Activated T-helper 2 cell treated with anti-CD3 and anti-CD28 coated beads, Interferon-gamma antibody, Interleukin-2, Interleukin-4, amounts not matched to agents 10 μg/mL and 5 μg/mL and 100 μg/mL, durations not matched to agents 14 hours and 24 hours and 36 hours (primary cell): ENCODE measurements at regions of chr7 and their contacts with region 1.

Region 1: DNA sequence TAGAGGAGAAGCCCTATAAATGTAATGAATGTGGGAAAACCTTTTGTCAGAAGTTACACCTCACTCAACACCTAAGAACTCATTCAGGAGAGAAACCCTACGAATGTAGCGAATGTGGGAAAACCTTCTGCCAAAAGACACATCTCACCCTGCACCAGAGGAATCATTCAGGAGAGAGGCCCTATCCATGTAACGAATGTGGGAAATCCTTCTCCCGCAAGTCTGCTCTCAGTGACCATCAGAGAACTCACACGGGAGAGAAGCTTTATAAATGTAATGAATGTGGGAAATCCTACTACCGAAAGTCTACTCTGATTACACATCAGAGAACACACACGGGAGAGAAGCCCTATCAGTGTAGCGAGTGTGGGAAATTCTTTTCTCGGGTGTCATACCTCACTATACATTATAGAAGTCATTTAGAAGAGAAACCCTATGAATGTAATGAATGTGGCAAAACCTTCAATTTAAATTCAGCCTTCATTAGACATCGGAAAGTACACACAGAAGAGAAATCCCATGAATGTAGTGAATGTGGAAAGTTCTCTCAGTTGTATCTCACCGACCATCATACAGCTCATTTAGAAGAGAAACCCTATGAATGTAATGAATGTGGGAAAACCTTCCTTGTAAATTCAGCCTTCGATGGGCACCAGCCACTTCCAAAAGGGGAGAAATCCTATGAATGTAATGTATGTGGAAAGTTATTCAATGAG is 18.9 kb downstream of the RBAK start:
- DNase-seq: no peak
- H3K4me3 Mint-ChIP-seq: no peak overlapping the region
- H3K27ac Mint-ChIP-seq: no peak overlapping the region
- H3K4me1 Mint-ChIP-seq: no peaks in the 10 kb centered on the region
- H3K27me3 Mint-ChIP-seq: no peaks in the 10 kb centered on the region

Region 2: GRCh38 chr7:6691609-6692106 is 1627.1 kb after region 1 on chr7:
- intact Hi-C with region 1: loop called (anchors 10 kb)
- DNase-seq: no peak
- H3K4me3 Mint-ChIP-seq: no peak overlapping the region
- H3K27ac Mint-ChIP-seq: no peak overlapping the region
- H3K4me1 Mint-ChIP-seq: no peaks in the 10 kb centered on the region
- H3K27me3 Mint-ChIP-seq: no peaks in the 10 kb centered on the region